Motor neuron (in vitro differentiated cells): ENCODE measurements at regions of chr5 and their contacts with region 1.

Region 1: GRCh38 chr5:63963080-63963735 is 963 bp upstream of the HTR1A start:
- ATAC-seq: peak in 7 of 8 experiments; percentile 46 to 78 (median 53)
- H3K4me3 ChIP-seq: no peak overlapping the region
- H3K27ac ChIP-seq: no peak overlapping the region
- H3K4me1 ChIP-seq: no peaks in the 10 kb centered on the region

Region 2: GRCh38 chr5:62431735-62432620 is 1531.2 kb before region 1 on chr5:
- in situ Hi-C with region 1: loop called in 1 of 9 experiments (anchors 25 kb)
- ATAC-seq: peak in 4 of 8 experiments; percentile 14 to 96 (median 74)
- H3K4me3 ChIP-seq: no peak overlapping the region
- H3K27ac ChIP-seq: no peak overlapping the region
- H3K4me1 ChIP-seq: no peaks in the 10 kb centered on the region

Region 3: GRCh38 chr5:62460578-62460983 is 1502.6 kb before region 1 on chr5:
- in situ Hi-C with region 1: loop called in 1 of 9 experiments (anchors 25 kb)
- ATAC-seq: peak in 4 of 8 experiments; percentile 65 to 85 (median 74)
- H3K4me3 ChIP-seq: no peak overlapping the region
- H3K27ac ChIP-seq: no peak overlapping the region
- H3K4me1 ChIP-seq: no peaks in the 10 kb centered on the region

Region 4: DNA sequence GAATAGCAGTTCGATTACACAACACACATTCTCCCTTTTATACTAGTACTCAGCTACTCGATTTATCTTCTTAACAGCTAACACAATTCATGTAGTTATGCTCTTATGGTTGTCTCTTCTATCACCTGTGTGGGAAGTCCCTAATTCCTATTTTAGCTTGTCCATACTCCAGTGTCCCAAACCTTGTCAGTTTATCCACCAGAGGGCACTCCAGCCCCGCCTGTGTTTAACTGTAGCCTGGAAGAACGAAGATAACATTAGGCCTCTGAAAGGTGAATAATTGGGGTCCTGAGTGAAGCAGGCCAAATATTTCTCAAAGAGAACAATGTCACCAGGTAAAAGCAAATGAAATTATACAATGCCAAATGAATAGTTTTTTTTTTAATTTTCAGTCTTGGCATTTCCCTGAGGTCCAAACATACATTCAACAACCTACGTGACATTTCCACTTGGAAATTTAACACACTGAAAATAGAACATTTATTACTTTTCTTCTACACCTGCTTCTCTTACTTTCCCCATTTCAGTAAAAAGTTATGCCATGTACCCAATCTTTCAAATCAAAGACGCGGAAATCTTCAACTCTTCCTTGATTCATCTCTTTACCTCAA is 561.7 kb before region 1 on chr5:
- in situ Hi-C with region 1: loop called in 5 of 9 experiments (anchors 10 to 25 kb)
- ATAC-seq: peak; percentile 51 to 90 (median 75)
- H3K4me3 ChIP-seq: no peak overlapping the region
- H3K27ac ChIP-seq: no peak overlapping the region
- H3K4me1 ChIP-seq: no peaks in the 10 kb centered on the region

Region 5: GRCh38 chr5:63439537-63439936 is 523.7 kb before region 1 on chr5:
- in situ Hi-C with region 1: loop called in 1 of 9 experiments (anchors 25 kb)
- ATAC-seq: no peak
- H3K4me3 ChIP-seq: no peak overlapping the region
- H3K27ac ChIP-seq: no peak overlapping the region
- H3K4me1 ChIP-seq: no peaks in the 10 kb centered on the region

Region 6: DNA sequence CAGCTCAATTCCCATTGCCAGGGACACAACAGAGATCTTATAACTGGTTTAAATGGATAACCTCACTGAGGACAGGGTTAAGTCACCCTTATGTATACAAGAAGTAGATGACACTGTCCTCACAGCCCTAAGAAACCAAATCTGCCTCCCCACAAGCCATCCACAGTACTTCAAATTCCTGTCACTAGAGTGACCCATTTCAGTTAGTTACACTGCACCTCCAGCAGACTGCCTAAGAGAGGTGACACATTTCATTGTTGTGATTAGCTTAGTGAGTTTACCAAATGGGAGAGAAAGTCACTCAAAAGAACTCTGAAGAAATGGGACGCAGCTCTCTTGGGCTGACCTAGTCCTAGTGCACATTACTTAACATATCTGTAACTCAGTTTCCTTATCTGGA is 52.6 kb after region 1 on chr5:
- in situ Hi-C with region 1: no loop called
- ATAC-seq: no peak
- H3K4me3 ChIP-seq: no peak overlapping the region
- H3K27ac ChIP-seq: no peak overlapping the region
- H3K4me1 ChIP-seq: no peaks in the 10 kb centered on the region